ENCODE measurements at regions of chr5 and their contacts with region 1.

Region 1: GRCh38 chr5:133868946-133869518 is 99.4 kb downstream of the C5orf15 start:
- DNase-seq: peak; percentile 88
- H3K4me3 Mint-ChIP-seq: no peak overlapping the region
- H3K27ac Mint-ChIP-seq: no peak overlapping the region
- H3K4me1 Mint-ChIP-seq: peaks cover 24% of the 10 kb centered on the region
- H3K27me3 Mint-ChIP-seq: peaks cover 6% of the 10 kb centered on the region

Region 2: DNA sequence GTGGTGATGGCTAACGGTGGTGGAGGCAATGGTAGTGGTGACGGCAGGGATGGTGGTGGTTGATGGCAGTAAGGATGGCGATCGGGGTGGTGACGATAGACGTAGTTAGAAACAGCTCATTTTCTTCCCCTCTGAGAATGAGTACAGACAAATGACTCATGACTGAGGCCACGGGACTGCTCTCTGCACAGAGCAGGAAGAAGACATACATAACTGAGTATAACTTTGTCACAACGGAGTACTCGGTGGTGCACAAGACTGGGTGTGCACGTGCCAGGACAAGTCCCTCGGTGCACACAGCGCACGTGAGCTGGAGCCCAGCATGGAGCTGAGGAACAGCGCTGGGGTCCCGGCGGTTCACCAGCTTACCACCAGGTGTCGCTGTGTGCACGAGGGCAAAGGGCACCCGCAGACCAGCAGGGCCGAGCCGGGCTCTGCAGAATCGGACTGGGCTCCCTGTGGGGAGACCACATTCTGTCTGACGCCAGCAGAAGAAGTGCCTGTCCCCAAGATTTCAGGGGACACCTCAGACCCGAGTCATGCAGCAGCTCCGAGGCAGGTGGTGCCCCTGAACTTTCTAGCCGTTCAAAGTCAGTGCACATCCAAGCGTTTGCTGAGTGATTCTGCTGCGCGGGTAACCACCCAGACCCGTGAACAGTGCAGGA is 445.3 kb before region 1 on chr5:
- CTCF ChIA-PET with region 1: interaction called, 23 read pairs
- POLR2A ChIA-PET with region 1: no interaction called
- intact Hi-C with region 1: loop called (anchors 5 kb)
- DNase-seq: peak; percentile 76
- H3K4me3 Mint-ChIP-seq: no peak overlapping the region
- H3K27ac Mint-ChIP-seq: no peak overlapping the region
- H3K4me1 Mint-ChIP-seq: peaks cover 10% of the 10 kb centered on the region
- H3K27me3 Mint-ChIP-seq: peaks cover 11% of the 10 kb centered on the region

Region 3: GRCh38 chr5:133552931-133553525 is 316.0 kb before region 1 on chr5:
- CTCF ChIA-PET with region 1: interaction called, 15 read pairs
- POLR2A ChIA-PET with region 1: no interaction called
- intact Hi-C with region 1: loop called (anchors 1 kb)
- DNase-seq: peak; percentile 71
- H3K4me3 Mint-ChIP-seq: no peak overlapping the region
- H3K27ac Mint-ChIP-seq: no peak overlapping the region
- H3K4me1 Mint-ChIP-seq: no peaks in the 10 kb centered on the region
- H3K27me3 Mint-ChIP-seq: peaks cover 19% of the 10 kb centered on the region

Region 4: GRCh38 chr5:133754575-133755169 is 114.4 kb before region 1 on chr5:
- CTCF ChIA-PET with region 1: interaction called, 23 read pairs
- POLR2A ChIA-PET with region 1: no interaction called
- intact Hi-C with region 1: loop called (anchors 2 kb)
- DNase-seq: peak; percentile 52
- H3K4me3 Mint-ChIP-seq: no peak overlapping the region
- H3K27ac Mint-ChIP-seq: no peak overlapping the region
- H3K4me1 Mint-ChIP-seq: no peaks in the 10 kb centered on the region
- H3K27me3 Mint-ChIP-seq: peaks cover 15% of the 10 kb centered on the region

Region 5: DNA sequence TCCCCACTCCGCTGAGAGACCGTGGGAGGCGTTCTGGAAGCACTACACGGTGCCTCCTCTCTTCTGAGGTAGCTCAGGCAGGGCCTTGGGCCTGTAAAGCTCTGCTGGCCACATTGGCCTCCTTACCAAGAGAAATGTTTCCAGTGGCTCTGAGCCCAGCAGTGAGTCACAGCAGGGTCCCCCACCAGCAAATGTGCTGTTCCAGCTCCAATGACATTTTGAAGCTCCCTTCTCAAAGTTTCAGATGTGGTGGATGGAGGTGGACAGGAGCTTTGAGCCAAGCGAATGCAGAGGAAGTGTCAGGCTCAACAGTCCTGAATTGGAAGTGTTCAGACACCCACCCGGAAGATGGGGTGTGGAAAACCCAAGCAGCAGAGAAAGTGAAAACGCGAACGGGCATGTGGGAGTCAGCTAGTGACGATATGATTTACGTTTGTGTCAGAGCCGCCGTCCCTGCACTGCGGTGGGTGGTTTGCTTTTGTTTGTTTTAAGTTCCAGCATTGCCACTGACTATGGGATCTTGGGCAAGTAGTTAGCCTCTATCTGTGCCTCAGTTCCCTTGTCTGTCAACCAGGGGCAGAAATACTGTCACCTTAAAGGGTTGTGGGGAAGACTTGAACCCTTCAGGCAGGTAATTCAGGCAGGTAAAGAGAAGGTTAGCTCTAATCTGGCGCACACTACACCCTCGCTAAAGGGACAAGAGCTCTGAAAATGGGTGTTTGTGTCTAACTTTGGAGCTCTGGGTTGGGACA is 61.2 kb after region 1 on chr5:
- CTCF ChIA-PET with region 1: interaction called, 6 read pairs
- POLR2A ChIA-PET with region 1: interaction called, 3 read pairs
- intact Hi-C with region 1: loop called (anchors 1 kb)
- DNase-seq: peak; percentile 88
- H3K4me3 Mint-ChIP-seq: peak overlapping the region; percentile 79
- H3K27ac Mint-ChIP-seq: peak overlapping the region; percentile 98
- H3K4me1 Mint-ChIP-seq: peaks cover 47% of the 10 kb centered on the region
- H3K27me3 Mint-ChIP-seq: no peaks in the 10 kb centered on the region

Region 6: GRCh38 chr5:134053840-134054338 is 184.9 kb after region 1 on chr5:
- CTCF ChIA-PET with region 1: no interaction called
- POLR2A ChIA-PET with region 1: no interaction called
- intact Hi-C with region 1: no loop called
- DNase-seq: no peak
- H3K4me3 Mint-ChIP-seq: no peak overlapping the region
- H3K27ac Mint-ChIP-seq: peak overlapping the region; percentile 74
- H3K4me1 Mint-ChIP-seq: peaks cover 29% of the 10 kb centered on the region
- H3K27me3 Mint-ChIP-seq: no peaks in the 10 kb centered on the region

Region 7: DNA sequence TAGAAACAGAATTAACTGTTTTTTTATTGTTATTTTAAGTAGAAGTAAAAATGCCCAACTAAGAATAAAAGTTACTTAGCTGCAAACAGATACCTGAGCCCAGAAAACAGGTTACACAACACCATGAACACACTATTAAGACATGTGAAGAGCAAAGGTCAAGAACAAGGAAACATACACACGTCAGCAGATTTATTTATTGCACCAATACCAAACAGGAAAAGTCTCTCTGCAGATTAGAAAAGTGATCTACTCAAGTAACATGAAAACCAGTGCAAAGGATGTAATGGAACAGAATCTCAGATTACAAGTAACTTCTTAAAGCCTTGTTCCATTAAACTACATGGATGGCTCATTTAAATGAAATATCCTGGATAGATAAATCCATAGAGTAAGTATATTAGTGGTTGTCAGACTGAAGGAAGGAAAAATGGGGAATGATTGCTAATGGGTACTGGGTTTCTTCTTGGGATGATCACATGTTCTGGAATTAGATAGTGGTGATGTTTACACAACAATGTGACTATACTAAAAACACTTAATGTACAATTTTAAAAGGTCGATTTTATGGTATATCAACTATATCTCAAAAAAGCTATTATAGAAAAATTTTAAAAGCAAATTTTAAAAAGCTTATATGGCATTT is 757.5 kb after region 1 on chr5:
- CTCF ChIA-PET with region 1: no interaction called
- POLR2A ChIA-PET with region 1: no interaction called
- intact Hi-C with region 1: no loop called
- DNase-seq: no peak
- H3K4me3 Mint-ChIP-seq: no peak overlapping the region
- H3K27ac Mint-ChIP-seq: no peak overlapping the region
- H3K4me1 Mint-ChIP-seq: peaks cover 31% of the 10 kb centered on the region
- H3K27me3 Mint-ChIP-seq: no peaks in the 10 kb centered on the region